IMR-90 (cell line): ENCODE measurements at regions of chr11 and their contacts with region 1.

Region 1: GRCh38 chr11:94638301-94638901 is 71.2 kb downstream of the PIWIL4 start:
- DNase-seq: no peak
- ATAC-seq: peak; percentile 56
- H3K4me3 ChIP-seq: no peak overlapping the region
- H3K27ac ChIP-seq: peak overlapping the region; percentile 61; the same call in 1 of the 2 replicates
- H3K4me1 ChIP-seq: peaks cover 8% of the 10 kb centered on the region
- H3K27me3 ChIP-seq: no peaks in the 10 kb centered on the region
- CTCF ChIP-seq: no peak
- POLR2A ChIP-seq: no peak
- RAD21 ChIP-seq: no peak

Region 2: DNA sequence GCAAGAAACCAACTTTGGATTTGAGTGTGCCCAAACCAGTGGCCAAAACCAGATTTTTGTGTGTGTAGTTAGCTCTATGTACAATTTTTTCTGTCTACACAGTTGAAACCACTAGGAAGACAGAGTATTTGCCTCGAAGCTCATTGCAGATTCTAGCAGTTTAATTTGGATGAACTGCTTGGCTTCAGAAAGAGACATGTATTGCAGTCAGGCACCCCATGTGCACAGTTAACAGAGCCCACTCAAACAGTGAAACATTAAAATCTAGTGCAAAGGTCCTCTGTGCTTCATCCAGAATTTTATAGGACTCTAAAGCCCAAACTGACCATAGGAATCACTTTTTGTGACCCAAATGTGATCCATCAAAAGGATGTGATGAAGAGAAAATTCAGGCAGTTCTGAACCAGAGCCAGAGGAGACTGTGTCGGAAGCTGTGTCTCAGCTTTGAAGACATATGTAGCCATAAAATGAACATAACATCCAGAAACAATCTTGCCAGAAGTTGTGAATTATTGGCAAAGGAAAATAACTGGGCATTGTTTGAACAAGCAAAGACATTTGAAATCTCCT is 427.1 kb before region 1 on chr11:
- CTCF ChIA-PET with region 1: no interaction called
- POLR2A ChIA-PET with region 1: no interaction called
- dilution Hi-C with region 1: no loop called
- in situ Hi-C with region 1: no loop called
- intact Hi-C with region 1: no loop called
- DNase-seq: no peak
- ATAC-seq: no peak
- H3K4me3 ChIP-seq: no peak overlapping the region
- H3K27ac ChIP-seq: no peak overlapping the region
- H3K4me1 ChIP-seq: no peaks in the 10 kb centered on the region
- H3K27me3 ChIP-seq: no peaks in the 10 kb centered on the region
- CTCF ChIP-seq: no peak
- POLR2A ChIP-seq: no peak
- RAD21 ChIP-seq: no peak

Region 3: DNA sequence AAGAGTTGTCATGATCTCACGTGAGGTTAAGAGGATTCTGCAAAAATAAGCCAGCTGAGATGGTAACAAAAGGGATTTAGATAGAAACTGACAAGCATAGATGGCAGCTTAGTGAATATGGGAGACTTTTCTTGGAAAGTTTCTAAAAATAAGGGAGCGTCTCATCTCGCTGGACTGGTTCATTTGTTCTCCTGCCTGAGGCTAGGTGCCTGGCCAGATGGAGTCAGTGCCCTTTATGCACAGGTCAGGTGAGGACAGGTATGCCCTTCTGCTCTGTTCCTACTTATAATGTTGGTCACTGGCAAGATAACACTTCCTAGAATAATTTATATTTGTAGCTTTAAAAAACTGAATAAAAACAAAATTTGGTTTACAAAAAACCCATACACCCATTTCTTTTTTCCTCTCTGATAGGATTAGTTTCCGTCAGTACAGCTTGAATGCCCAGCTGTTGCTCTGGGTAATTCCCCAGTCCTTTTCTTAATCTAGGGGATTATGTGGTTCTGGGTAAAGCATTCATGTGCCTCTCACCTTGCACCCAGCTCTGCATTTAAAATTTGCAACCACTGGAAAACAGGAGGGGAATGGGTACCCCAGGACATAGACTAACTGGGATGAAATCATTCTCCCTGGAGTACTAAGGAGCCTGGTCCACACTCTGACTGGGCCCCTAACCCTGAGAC is 219.8 kb after region 1 on chr11:
- CTCF ChIA-PET with region 1: no interaction called
- POLR2A ChIA-PET with region 1: interaction called, 14 read pairs
- dilution Hi-C with region 1: no loop called
- in situ Hi-C with region 1: no loop called
- intact Hi-C with region 1: no loop called
- DNase-seq: no peak
- ATAC-seq: no peak
- H3K4me3 ChIP-seq: no peak overlapping the region
- H3K27ac ChIP-seq: no peak overlapping the region
- H3K4me1 ChIP-seq: no peaks in the 10 kb centered on the region; the same call in 1 of the 2 replicates
- H3K27me3 ChIP-seq: no peaks in the 10 kb centered on the region
- CTCF ChIP-seq: no peak
- POLR2A ChIP-seq: no peak
- RAD21 ChIP-seq: no peak